Heart right ventricle (tissue), 16 donors: ENCODE measurements at regions of chr6 and their contacts with region 1.

Region 1: GRCh38 chr6:165884813-165885765 is 222.0 kb upstream of the PDE10A start:
- DNase-seq: peak; percentile 77 to 82
- ATAC-seq: peak; percentile 82 to 97 (median 90)
- H3K4me3 ChIP-seq: no peak overlapping the region
- H3K27ac ChIP-seq: no peak overlapping the region
- H3K4me1 ChIP-seq: no peaks in the 10 kb centered on the region
- H3K27me3 ChIP-seq: peaks cover 0 to 6% (median 2%) of the 10 kb centered on the region in 7 donors
- CTCF ChIP-seq: peak; percentile 82 to 94 (median 92)

Region 2: GRCh38 chr6:165931675-165932074 is 46.6 kb after region 1 on chr6:
- intact Hi-C with region 1: no loop called
- DNase-seq: no peak
- ATAC-seq: no peak
- H3K4me3 ChIP-seq: no peak overlapping the region
- H3K27ac ChIP-seq: no peak overlapping the region
- H3K4me1 ChIP-seq: no peaks in the 10 kb centered on the region
- H3K27me3 ChIP-seq: peaks cover 0 to 13% (median 7%) of the 10 kb centered on the region in 7 donors
- CTCF ChIP-seq: no peak

Region 3: DNA sequence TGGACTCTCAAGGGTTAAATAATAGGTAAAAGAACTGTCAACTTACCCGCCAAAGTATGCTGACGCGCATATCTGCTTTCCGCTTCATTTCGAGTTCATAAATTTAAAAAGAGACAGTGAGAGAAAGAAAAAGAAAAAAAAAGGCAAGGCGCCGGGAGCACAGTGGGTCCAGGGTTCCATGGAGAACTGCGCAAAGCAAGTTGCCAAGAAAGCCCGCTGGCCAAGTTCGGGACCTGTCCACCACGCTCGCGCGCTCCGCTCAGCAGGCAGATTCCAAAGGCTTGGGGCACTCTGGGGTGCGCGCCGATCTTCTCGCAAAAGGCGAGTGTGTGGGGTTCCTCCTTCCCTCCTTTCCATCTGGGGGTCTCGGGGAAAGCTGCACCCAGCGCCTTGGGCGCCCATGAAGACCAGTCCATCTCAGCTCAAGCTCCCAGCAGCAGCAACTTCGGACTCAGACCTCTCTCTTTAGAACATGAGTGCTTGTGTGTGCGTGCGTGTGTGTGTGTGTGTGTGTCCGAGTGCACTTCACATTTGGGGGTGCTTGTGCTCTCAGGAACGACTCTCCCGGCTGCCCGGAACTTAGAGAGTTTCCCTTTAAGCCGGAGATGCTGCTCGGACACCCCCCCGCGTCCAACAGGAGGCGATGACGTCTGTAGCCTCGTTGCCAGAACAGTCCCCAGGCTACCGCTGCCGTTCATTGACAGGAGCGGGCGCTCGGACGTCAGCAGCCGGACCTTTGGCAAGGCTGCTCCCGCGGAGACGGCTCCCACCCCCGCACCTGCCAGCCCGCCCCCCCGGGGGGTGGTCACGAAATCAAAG is 102.6 kb after region 1 on chr6:
- intact Hi-C with region 1: loop called in 3 of 10 experiments (anchors 10 kb)
- DNase-seq: peak; percentile 84 to 90
- ATAC-seq: peak; percentile 87 to 97 (median 94)
- H3K4me3 ChIP-seq: peak overlapping the region; percentile 33 to 66 (median 52)
- H3K27ac ChIP-seq: peak overlapping the region in 5 of 10 donors; percentile 30 to 77 (median 71)
- H3K4me1 ChIP-seq: peaks cover 0 to 22% (median 9%) of the 10 kb centered on the region in 9 donors
- H3K27me3 ChIP-seq: peaks cover 7 to 59% (median 35%) of the 10 kb centered on the region in 7 donors
- CTCF ChIP-seq: peak in 1 of 9 donors; percentile 10

Region 4: GRCh38 chr6:166097915-166098522 is 212.9 kb after region 1 on chr6:
- intact Hi-C with region 1: loop called in 8 of 10 experiments (anchors 1 to 5 kb)
- DNase-seq: peak; percentile 69 to 74
- ATAC-seq: peak; percentile 85 to 98 (median 94)
- H3K4me3 ChIP-seq: peak overlapping the region in 8 of 10 donors; percentile 9 to 49 (median 40)
- H3K27ac ChIP-seq: no peak overlapping the region
- H3K4me1 ChIP-seq: peaks cover 0 to 4% (median 0%) of the 10 kb centered on the region in 9 donors
- H3K27me3 ChIP-seq: peaks cover 0 to 20% (median 14%) of the 10 kb centered on the region in 7 donors
- CTCF ChIP-seq: peak; percentile 58 to 89 (median 88)

Region 5: GRCh38 chr6:166106076-166106686 is 221.1 kb after region 1 on chr6:
- intact Hi-C with region 1: loop called in 6 of 10 experiments (anchors 2 to 5 kb)
- DNase-seq: peak; percentile 60 to 63
- ATAC-seq: peak; percentile 52 to 77 (median 70)
- H3K4me3 ChIP-seq: no peak overlapping the region
- H3K27ac ChIP-seq: no peak overlapping the region
- H3K4me1 ChIP-seq: peaks cover 0 to 2% (median 0%) of the 10 kb centered on the region in 9 donors
- H3K27me3 ChIP-seq: peaks cover 0 to 30% (median 19%) of the 10 kb centered on the region in 7 donors
- CTCF ChIP-seq: peak; percentile 67 to 88 (median 85)